Panc1 (cell line): ENCODE measurements at regions of chr10 and their contacts with region 1.

Region 1: GRCh38 chr10:103499881-103500280 is 6.4 kb downstream of the NEURL1 start:
- DNase-seq: no peak
- ATAC-seq: no peak
- H3K4me3 ChIP-seq: no peak overlapping the region
- H3K27ac ChIP-seq: no peak overlapping the region
- H3K4me1 ChIP-seq: peaks cover 4% of the 10 kb centered on the region; the same call in 1 of the 2 replicates
- H3K27me3 ChIP-seq: peaks cover 26% of the 10 kb centered on the region
- CTCF ChIP-seq: no peak

Region 2: GRCh38 chr10:103542764-103543616 is 43.1 kb after region 1 on chr10:
- CTCF ChIA-PET with region 1: interaction called, 16 read pairs
- POLR2A ChIA-PET with region 1: no interaction called
- in situ Hi-C with region 1: no loop called
- intact Hi-C with region 1: no loop called
- DNase-seq: no peak
- ATAC-seq: peak; percentile 65
- H3K4me3 ChIP-seq: peak overlapping the region in 1 of 2 experiments; percentile 4; a peak in 1 of 4 replicates
- H3K27ac ChIP-seq: no peak overlapping the region
- H3K4me1 ChIP-seq: peaks cover 8% of the 10 kb centered on the region
- H3K27me3 ChIP-seq: peaks cover 5% of the 10 kb centered on the region; the same call in 1 of the 2 replicates
- CTCF ChIP-seq: no peak; the same call in 1 of the 2 replicates